Transverse colon (tissue), 4 donors: ENCODE measurements at regions of chr6 and their contacts with region 1.

Region 1: GRCh38 chr6:157614026-157614568 is 208.9 kb upstream of the SNX9 start:
- DNase-seq: peak; percentile 35
- H3K4me3 ChIP-seq: no peak overlapping the region
- H3K27ac ChIP-seq: peak overlapping the region; percentile 64 to 75 (median 68)
- H3K4me1 ChIP-seq: peaks cover 14 to 29% (median 21%) of the 10 kb centered on the region in 4 donors
- H3K27me3 ChIP-seq: no peaks in the 10 kb centered on the region
- CTCF ChIP-seq: no peak
- EP300 ChIP-seq: no peak
- POLR2A ChIP-seq: no peak

Region 2: DNA sequence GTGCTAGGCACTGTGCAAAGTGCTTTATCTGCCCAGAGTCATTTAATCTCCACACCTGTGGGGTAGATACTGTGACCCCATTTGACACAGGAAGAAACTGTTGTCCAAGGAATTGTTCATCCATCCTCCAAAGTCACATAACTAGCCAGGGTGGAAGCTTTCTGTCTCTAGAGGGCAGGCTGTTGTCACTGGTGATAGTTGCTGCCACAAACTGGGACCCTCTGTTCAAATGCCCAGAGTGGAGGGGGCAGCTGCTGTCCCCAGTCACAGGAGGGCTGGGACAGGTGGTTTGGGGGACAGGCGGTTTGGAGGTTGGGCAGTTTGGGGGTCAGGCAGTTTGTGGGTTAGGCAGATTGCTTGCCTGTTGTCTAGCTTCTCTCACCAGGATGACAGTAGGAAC is 274.7 kb before region 1 on chr6:
- in situ Hi-C with region 1: loop called in 1 of 4 experiments (anchors 25 kb)
- intact Hi-C with region 1: no loop called
- DNase-seq: no peak
- H3K4me3 ChIP-seq: no peak overlapping the region
- H3K27ac ChIP-seq: no peak overlapping the region
- H3K4me1 ChIP-seq: no peaks in the 10 kb centered on the region
- H3K27me3 ChIP-seq: no peaks in the 10 kb centered on the region
- CTCF ChIP-seq: no peak
- EP300 ChIP-seq: no peak
- POLR2A ChIP-seq: no peak

Region 3: DNA sequence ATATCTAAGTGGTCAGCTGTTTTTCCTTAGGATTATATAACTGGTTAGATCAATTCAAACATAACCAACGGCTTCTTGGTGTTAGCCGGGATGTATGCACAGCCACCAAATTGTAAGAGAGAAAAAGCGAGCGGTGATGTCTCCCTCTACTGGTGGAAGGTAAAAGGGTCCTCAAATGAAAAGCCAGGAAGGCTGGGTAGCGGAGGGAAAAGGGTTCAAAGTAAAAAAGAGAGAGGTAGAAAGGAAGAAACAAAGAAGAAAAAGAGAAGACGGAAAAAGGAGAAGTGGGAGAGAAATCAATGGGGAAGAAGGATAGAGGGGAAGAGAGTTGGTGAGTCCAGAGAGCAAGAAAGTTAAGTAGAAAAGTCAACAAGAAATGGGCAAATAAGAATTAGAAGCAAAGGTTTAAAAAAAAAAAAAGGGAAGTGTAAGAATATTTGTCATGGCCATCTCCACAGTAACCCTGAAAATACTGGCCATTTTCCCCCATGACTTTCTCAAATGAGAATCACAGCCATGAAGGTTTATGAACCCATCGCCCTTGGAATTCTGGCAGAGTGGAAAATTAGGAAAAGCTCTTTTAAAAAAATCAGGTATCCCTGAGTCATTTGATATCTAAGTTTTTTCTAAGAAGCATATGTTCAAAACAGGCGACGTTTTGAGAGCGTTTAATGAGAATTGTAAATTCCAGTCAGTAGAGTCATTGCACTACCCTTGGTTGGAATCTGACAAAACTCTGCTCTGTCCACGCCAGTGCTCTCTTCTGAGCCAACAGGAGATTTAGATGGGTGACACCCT is 53.3 kb after region 1 on chr6:
- in situ Hi-C with region 1: no loop called
- intact Hi-C with region 1: no loop called
- DNase-seq: peak; percentile 58
- H3K4me3 ChIP-seq: no peak overlapping the region
- H3K27ac ChIP-seq: no peak overlapping the region
- H3K4me1 ChIP-seq: peaks cover 4 to 37% (median 15%) of the 10 kb centered on the region in 4 donors
- H3K27me3 ChIP-seq: no peaks in the 10 kb centered on the region
- CTCF ChIP-seq: peak; percentile 85 to 94 (median 85)
- EP300 ChIP-seq: no peak
- POLR2A ChIP-seq: no peak